ENCODE measurements at regions of chr6 and their contacts with region 1.

Region 1: DNA sequence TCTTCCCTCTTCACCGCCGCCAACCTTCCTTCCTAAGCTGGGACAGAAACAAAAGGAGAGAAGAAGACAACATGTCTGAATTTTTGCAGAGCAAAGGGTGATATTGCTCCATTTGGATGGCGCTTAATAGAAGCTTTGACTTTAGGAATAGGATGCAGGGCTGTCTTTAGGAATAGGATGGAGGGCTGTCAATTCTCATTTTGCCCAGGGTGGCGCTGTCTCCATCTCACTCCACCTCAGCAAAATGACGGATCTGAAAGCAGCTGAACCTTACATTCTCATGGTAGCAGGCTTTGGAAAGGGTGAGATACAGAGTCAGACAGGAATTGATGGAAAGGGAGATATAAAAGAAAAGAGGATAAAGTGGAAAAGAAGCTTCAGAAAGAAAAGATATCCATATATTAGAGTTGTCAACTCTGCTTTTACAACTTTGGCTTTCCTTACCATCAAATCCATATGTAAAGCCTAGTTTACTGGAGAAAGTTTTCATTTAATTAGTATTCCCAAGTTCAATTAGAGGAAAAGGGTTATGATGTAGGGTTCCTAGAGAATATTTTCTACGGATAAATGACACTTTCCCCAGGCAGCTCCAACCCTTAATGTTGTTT is 2.4 kb downstream of the MTCL3 start:
- DNase-seq: peak; percentile 23
- ATAC-seq: peak; percentile 90
- H3K4me3 ChIP-seq: peak overlapping the region in 2 of 3 experiments; percentile 28 to 64; a peak in 2 of 6 replicates
- H3K27ac ChIP-seq: no peak overlapping the region
- H3K4me1 ChIP-seq: peaks cover 5% of the 10 kb centered on the region
- H3K27me3 ChIP-seq: peaks cover 4 to 38% of the 10 kb centered on the region in 2 experiments; a peak in 3 of 5 replicates
- CTCF ChIP-seq: peak; percentile 60
- EP300 ChIP-seq: no peak
- POLR2A ChIP-seq: no peak
- RAD21 ChIP-seq: no peak

Region 2: DNA sequence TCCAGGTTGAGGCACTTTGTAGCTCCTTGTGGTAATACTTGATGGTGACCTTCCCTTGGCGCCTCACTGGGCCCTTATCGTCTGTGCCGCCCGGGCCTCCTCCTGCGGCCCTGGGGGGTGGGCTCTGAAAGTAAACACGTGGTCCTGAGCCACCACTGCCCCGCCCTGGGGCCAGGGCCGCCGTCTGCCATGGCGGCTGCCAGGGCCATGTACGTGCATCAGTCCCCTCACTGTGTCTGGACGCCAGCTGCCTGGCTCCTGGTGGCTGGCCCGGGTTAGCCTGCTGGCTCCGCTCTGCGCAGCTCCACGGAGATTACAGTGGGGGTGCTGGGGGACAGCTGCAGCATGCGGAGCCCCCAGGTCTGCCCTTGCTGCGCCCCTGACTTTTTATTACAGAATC is 1258.6 kb before region 1 on chr6:
- CTCF ChIA-PET with region 1: no interaction called
- POLR2A ChIA-PET with region 1: no interaction called
- in situ Hi-C with region 1: no loop called
- intact Hi-C with region 1: loop called (anchors 5 kb)
- DNase-seq: no peak
- ATAC-seq: no peak
- H3K4me3 ChIP-seq: no peak overlapping the region
- H3K27ac ChIP-seq: no peak overlapping the region
- H3K4me1 ChIP-seq: no peaks in the 10 kb centered on the region
- H3K27me3 ChIP-seq: no peaks in the 10 kb centered on the region
- CTCF ChIP-seq: no peak
- EP300 ChIP-seq: no peak
- POLR2A ChIP-seq: no peak
- RAD21 ChIP-seq: no peak

Region 3: GRCh38 chr6:127484212-127484858 is 32.4 kb before region 1 on chr6:
- CTCF ChIA-PET with region 1: no interaction called
- POLR2A ChIA-PET with region 1: no interaction called
- in situ Hi-C with region 1: no loop called
- intact Hi-C with region 1: loop called (anchors 2 kb)
- DNase-seq: peak; percentile 73
- ATAC-seq: peak; percentile 74
- H3K4me3 ChIP-seq: peak overlapping the region in 2 of 3 experiments; percentile 1 to 6; a peak in 2 of 6 replicates
- H3K27ac ChIP-seq: no peak overlapping the region
- H3K4me1 ChIP-seq: peaks cover 20% of the 10 kb centered on the region
- H3K27me3 ChIP-seq: no peaks in the 10 kb centered on the region
- CTCF ChIP-seq: no peak
- EP300 ChIP-seq: no peak
- POLR2A ChIP-seq: no peak
- RAD21 ChIP-seq: no peak

Region 4: DNA sequence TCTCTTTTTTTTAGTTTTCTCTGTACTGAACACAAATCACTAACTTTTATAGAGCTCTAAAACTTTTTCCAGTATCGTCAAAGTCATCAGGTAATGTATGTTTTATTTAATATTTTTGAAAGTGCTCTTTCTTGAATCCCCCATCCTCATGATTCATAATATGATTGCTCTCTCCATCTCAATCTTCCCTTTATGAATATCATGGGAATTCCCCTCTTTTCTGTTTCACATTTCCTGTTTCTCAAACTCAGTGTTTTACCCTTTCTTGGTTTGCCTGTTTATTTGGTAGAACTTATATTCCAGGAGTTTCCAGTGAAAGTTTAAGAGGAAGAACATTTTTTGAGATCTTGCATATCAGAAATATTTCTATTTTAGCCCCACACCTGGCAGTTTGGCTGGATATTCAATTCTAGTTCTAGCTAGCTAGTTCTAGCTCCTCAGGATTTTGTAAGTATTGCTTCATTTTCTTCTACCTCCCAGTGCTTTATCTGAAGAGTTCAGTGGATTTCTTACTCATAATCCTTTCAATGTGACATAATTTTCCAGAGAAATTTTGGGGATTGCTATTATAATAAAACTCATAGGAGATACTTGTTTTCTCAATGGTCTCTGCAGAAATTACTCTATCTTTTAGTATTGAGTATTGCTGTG is 54.1 kb after region 1 on chr6:
- CTCF ChIA-PET with region 1: no interaction called
- POLR2A ChIA-PET with region 1: no interaction called
- in situ Hi-C with region 1: no loop called
- intact Hi-C with region 1: no loop called
- DNase-seq: no peak
- ATAC-seq: no peak
- H3K4me3 ChIP-seq: no peak overlapping the region
- H3K27ac ChIP-seq: no peak overlapping the region
- H3K4me1 ChIP-seq: no peaks in the 10 kb centered on the region
- H3K27me3 ChIP-seq: no peaks in the 10 kb centered on the region
- CTCF ChIP-seq: no peak
- EP300 ChIP-seq: no peak
- POLR2A ChIP-seq: no peak
- RAD21 ChIP-seq: no peak